Adrenal gland (tissue), 19 donors: ENCODE measurements at regions of chr6 and their contacts with region 1.

Region 1: DNA sequence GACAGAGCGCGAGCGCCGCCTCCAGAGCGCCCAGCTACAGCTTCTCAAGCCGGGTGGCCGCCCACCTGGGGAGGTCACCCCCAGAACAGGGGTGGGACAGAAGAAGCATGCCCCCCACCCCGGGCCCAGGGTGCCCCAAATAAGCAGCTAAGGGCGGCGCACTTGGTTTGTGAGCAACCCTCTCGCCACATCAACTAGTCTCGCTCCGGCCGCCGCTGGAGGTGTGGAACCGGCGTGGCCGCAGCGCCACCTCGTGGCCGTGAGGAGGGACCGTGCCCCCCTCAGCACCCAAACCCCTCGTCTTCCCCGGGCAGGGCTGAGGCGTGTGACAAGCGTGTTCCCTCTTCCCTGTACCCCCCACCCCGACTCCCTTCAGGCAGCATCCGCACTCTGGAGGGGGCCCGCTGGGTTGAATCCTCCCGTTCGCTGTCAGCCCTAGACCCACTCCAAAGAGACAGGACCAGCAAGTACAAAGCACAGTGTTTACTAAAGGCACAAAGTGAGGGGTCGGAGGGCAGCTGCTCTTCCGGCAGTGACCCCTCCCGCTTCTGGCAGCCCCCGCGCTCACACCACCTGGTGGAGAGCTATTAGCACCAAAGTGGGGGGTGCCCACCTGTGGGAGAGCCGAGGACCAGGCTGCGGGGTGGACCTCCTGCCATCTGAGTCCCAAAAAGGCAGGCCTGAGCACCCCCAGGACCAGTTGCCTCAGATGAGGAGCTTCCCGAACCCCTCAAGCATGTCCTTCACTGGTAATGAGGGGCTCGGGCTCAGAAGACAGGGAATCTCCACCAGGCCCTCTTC is 45.4 kb downstream of the MDFI start:
- DNase-seq: peak; percentile 71 to 88 (median 83)
- H3K4me3 ChIP-seq: peak overlapping the region in 2 of 4 donors; percentile 27 to 60
- H3K27ac ChIP-seq: peak overlapping the region in 4 of 5 donors; percentile 63 to 85 (median 78)
- H3K4me1 ChIP-seq: peaks cover 18 to 31% of the 10 kb centered on the region in 2 donors
- H3K27me3 ChIP-seq: no peaks in the 10 kb centered on the region
- CTCF ChIP-seq: peak; percentile 67 to 91 (median 86)
- POLR2A ChIP-seq: peak in 1 of 2 donors; percentile 24

Region 2: DNA sequence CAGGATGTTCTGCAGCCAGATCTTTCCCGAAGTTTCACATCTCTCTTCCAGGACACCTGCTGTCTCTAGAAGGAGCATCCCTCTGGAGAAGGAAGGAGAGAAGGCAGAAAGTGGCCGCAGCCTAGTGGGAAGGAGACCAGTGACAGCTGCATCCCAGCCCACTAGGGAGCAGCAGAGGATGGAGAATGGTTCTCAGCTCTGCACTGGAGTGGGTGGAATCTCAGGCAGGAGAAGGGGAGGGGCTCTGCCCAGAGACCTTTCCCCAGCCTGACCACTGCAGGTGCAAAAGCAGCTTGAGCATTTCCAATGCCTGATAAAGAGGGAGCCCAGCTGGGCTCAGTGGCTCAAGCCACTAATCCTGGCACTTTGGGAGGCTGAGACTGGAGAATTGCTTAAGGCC is 316.0 kb before region 1 on chr6:
- intact Hi-C with region 1: loop called (anchors 5 kb)
- DNase-seq: peak in 5 of 7 donors; percentile 24 to 57 (median 35)
- H3K4me3 ChIP-seq: no peak overlapping the region
- H3K27ac ChIP-seq: no peak overlapping the region
- H3K4me1 ChIP-seq: peaks cover 4 to 13% of the 10 kb centered on the region in 2 donors
- H3K27me3 ChIP-seq: peaks cover 56% of the 10 kb centered on the region
- CTCF ChIP-seq: peak in 5 of 6 experiments; percentile 17 to 50 (median 47)
- POLR2A ChIP-seq: no peak

Region 3: DNA sequence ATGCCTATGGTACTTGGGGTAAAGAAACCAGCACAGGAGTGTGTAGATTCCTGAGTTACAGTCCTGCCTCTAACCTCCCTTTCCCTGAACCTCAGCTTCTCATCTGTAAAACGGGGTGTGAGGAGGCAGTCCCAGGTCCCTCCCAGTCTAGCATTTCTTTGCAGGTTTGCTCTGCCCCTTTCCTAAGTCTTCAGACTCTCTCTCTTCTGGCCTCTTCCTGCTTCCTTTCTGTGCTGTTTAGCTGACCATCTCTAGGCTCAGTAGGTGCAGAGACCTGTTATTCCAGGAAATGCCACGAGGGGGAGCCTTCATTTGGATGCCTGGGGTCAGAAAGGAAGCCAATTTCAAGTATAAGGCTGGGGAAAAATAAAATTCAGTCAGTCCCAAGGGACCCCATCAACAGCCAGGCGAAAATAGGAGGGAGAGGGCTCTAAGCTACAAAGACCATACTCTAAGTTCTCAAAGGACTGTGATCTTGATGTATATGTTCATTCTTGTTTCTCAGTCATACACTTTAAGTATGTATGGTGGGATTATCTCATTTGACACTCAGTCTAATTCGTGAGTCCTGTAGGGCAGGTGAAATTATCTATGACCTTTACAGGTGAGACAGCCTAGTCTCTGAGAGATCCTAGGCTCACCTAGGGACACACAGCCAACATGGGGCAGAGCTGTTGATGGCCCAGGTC is 259.2 kb before region 1 on chr6:
- intact Hi-C with region 1: loop called in 1 of 2 experiments (anchors 10 kb)
- DNase-seq: peak; percentile 67 to 92 (median 79)
- H3K4me3 ChIP-seq: no peak overlapping the region
- H3K27ac ChIP-seq: no peak overlapping the region
- H3K4me1 ChIP-seq: peaks cover 0 to 11% of the 10 kb centered on the region in 2 donors
- H3K27me3 ChIP-seq: peaks cover 25% of the 10 kb centered on the region
- CTCF ChIP-seq: peak; percentile 73 to 80 (median 77)
- POLR2A ChIP-seq: no peak

Region 4: GRCh38 chr6:41568585-41569384 is 114.9 kb before region 1 on chr6:
- intact Hi-C with region 1: no loop called
- DNase-seq: peak in 1 of 7 donors; percentile 20
- H3K4me3 ChIP-seq: no peak overlapping the region
- H3K27ac ChIP-seq: peak overlapping the region in 2 of 5 donors; percentile 21 to 50
- H3K4me1 ChIP-seq: peaks cover 0 to 23% of the 10 kb centered on the region in 2 donors
- H3K27me3 ChIP-seq: no peaks in the 10 kb centered on the region
- CTCF ChIP-seq: no peak
- POLR2A ChIP-seq: no peak

Region 5: GRCh38 chr6:41602864-41603608 is 80.7 kb before region 1 on chr6:
- intact Hi-C with region 1: loop called (anchors 2 kb)
- DNase-seq: peak; percentile 78 to 90 (median 81)
- H3K4me3 ChIP-seq: peak overlapping the region in 1 of 4 donors; percentile 33
- H3K27ac ChIP-seq: no peak overlapping the region
- H3K4me1 ChIP-seq: peaks cover 0 to 10% of the 10 kb centered on the region in 2 donors
- H3K27me3 ChIP-seq: no peaks in the 10 kb centered on the region
- CTCF ChIP-seq: peak; percentile 72 to 92 (median 88)
- POLR2A ChIP-seq: no peak

Region 6: DNA sequence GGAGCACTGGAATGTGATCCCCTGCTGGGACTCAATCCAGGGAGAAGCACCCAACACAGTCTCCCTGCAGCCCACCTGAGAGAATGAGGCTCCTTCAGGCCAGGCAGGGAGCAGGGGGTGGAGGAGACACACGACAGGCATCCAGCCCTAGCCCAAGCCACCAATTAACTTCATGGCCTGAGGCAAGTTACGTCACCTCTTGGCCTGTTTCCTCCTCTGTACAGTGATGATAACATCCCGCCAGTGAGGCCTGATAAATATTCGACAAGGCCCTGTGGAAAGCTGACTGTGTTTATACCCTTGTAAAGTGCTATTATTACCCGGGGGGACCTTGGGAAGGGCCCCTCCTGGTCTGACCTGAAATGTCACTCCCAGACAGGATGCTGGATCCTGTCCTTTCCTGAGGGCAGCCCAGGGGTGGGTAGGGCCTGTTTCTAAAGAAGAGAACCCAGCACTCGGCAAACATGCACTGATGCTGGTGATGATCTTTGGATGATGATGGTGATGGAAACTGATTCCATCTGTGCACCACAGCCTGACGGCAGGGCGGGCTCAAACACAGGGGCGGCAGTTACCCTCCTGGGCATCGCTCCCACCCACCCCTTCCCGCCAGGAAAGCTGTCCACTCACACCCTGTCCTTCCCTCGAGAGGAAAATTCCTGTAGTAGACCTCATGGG is 83.6 kb after region 1 on chr6:
- intact Hi-C with region 1: no loop called
- DNase-seq: peak; percentile 81 to 96 (median 87)
- H3K4me3 ChIP-seq: no peak overlapping the region
- H3K27ac ChIP-seq: peak overlapping the region in 4 of 5 donors; percentile 43 to 82 (median 63)
- H3K4me1 ChIP-seq: peaks cover 0 to 10% of the 10 kb centered on the region in 2 donors
- H3K27me3 ChIP-seq: no peaks in the 10 kb centered on the region
- CTCF ChIP-seq: no peak
- POLR2A ChIP-seq: no peak